PC-3 (cell line): ENCODE measurements at regions of chr14 and their contacts with region 1.

Region 1: DNA sequence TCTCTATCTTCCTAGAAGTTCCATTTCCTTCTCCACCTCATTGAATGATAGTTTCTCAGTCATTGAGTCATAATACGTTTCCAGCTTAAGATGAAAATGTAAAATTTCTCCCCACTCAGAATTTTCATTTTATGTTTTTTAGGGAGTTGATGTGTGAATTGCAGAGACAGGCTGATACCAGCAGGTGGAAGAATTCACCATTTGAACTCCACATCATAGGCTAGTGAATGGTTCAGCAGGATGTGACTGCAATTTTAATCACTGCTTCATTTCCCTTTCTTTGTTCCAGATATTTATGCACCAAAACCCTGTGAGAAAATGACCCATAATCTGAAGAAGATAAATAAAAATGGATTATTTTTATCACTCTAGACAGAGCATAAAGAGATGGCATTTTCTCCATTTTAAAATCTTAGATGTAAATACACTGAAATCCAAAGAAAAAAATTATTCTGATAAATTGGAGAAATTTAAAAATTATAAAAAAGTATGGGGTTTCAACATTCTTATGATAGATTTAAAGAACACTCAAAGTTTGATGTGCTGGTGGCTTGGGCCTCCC is 10.6 kb upstream of the PYGL start:
- DNase-seq: peak; percentile 82
- ATAC-seq: peak; percentile 69
- H3K4me3 ChIP-seq: peak overlapping the region; percentile 20; the same call in 1 of the 2 replicates
- H3K27ac ChIP-seq: peak overlapping the region; percentile 89
- H3K4me1 ChIP-seq: peaks cover 19% of the 10 kb centered on the region
- H3K27me3 ChIP-seq: no peaks in the 10 kb centered on the region
- CTCF ChIP-seq: peak; percentile 91

Region 2: DNA sequence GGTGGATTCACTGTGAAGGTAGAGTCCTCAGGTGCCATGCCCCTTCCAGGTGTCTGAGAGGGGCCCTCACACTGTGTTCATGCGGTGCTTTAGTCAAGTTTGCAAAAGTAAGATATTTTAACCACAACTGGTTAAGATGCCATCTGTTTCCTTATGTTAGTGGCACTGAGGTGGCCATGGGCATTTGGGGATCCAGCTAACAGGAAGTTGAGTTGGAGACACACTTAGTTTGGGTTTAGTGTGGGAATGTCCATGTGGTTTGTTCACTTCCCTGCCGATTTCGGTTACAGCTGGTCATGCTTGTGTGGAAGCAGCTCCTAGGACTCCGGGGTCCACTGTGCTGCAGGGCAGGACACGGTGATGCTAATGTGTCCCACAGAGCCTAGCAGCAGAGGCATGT is 100.4 kb before region 1 on chr14:
- CTCF ChIA-PET with region 1: no interaction called
- POLR2A ChIA-PET with region 1: no interaction called
- intact Hi-C with region 1: no loop called
- DNase-seq: no peak
- ATAC-seq: no peak
- H3K4me3 ChIP-seq: no peak overlapping the region
- H3K27ac ChIP-seq: no peak overlapping the region
- H3K4me1 ChIP-seq: peaks cover 4% of the 10 kb centered on the region
- H3K27me3 ChIP-seq: no peaks in the 10 kb centered on the region
- CTCF ChIP-seq: no peak

Region 3: DNA sequence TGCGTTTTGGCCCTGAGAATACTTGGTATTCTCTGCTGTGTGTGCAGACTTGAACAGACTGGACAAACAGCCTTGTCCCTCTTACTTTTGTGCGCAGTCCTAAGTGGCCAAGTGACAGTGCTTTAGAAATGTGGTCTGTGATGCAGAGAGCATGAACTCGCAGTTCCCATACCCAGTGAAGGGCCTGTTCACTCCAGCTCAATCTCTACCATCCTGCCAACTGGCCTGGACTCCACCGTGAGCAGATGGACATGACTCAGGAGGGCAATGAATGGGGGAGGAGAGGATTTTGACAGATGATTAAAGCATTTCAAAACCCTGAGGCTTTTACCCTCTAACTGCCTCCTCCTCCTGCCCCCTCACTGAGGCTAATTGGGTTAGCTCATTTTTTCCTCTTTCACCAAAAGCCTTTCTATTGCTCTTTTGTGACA is 51.9 kb after region 1 on chr14:
- CTCF ChIA-PET with region 1: no interaction called
- POLR2A ChIA-PET with region 1: no interaction called
- intact Hi-C with region 1: loop called (anchors 2 kb)
- DNase-seq: peak; percentile 86
- ATAC-seq: peak; percentile 77
- H3K4me3 ChIP-seq: peak overlapping the region; percentile 6; the same call in 1 of the 2 replicates
- H3K27ac ChIP-seq: peak overlapping the region; percentile 75
- H3K4me1 ChIP-seq: peaks cover 45% of the 10 kb centered on the region
- H3K27me3 ChIP-seq: no peaks in the 10 kb centered on the region
- CTCF ChIP-seq: no peak

Region 4: DNA sequence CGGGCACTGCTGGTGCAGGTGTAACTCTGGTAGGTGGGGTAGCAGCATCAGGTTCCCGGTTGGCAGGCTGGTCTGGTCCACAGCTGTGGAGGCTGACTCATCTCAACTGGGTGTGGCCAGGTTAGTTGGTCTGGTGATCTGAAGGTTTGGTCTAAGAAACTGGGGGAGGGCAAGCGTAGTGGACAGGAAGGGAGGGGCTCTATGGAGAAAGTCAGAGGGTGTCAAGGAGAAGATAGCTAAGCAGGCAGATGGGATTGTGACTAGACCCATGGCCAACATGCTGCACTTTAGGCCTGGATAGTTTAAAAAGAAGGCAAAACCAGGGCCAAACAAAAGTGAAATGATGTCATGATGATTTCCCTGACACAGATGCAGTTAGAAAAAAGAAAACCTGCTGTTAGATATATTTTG is 132.1 kb after region 1 on chr14:
- CTCF ChIA-PET with region 1: no interaction called
- POLR2A ChIA-PET with region 1: no interaction called
- intact Hi-C with region 1: loop called (anchors 2 kb)
- DNase-seq: peak; percentile 91
- ATAC-seq: peak; percentile 99
- H3K4me3 ChIP-seq: no peak overlapping the region
- H3K27ac ChIP-seq: no peak overlapping the region
- H3K4me1 ChIP-seq: peaks cover 13% of the 10 kb centered on the region
- H3K27me3 ChIP-seq: no peaks in the 10 kb centered on the region
- CTCF ChIP-seq: no peak

Region 5: GRCh38 chr14:51157012-51157411 is 202.1 kb after region 1 on chr14:
- CTCF ChIA-PET with region 1: interaction called, 3 read pairs
- POLR2A ChIA-PET with region 1: no interaction called
- intact Hi-C with region 1: loop called (anchors 1 kb)
- DNase-seq: peak; percentile 75
- ATAC-seq: peak; percentile 98
- H3K4me3 ChIP-seq: no peak overlapping the region
- H3K27ac ChIP-seq: no peak overlapping the region
- H3K4me1 ChIP-seq: peaks cover 11% of the 10 kb centered on the region
- H3K27me3 ChIP-seq: no peaks in the 10 kb centered on the region
- CTCF ChIP-seq: peak; percentile 91

Region 6: DNA sequence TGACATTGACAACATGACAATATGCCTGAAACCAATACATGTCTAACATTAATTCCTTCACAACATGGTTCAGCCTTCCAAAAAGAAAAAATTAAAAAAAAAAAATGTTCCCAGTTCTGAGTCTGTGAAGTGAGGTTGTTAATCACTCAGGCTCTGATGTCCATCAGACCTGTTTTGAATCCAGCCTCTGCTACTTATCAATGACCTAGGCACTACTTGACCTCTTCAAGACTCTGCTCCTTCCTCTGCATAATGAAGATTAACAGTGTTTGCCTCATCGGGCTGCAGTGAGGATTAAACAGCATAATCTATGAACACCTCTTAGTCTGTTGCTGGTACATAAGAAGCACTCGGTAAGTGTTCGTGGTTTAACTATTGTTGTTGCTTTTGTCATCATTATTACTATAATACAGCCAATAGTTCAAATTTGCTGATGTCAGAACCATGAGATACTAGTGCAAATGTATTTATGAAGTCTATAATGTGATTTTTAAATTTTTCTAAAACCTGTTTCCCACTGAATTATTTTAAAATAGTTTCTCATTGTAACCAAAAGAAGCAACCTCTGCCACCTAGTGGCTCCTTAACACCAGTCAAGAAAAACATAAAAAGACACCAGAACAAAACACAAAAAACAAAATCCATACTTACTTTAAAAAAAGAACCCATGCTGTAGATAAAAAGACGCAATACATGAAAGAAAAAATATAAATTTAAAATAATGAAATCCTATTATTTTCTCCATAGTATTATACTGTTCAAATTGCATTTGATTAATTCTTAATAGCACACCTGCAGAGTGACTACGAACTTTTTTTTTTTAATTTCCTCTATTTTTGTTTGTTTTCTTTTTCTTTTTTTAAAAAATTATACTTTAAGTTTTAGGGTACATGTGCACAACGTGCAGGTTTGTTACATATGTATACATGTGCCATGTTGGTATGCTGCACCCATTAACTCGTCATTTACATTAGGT is 264.9 kb after region 1 on chr14:
- CTCF ChIA-PET with region 1: interaction called, 5 read pairs
- POLR2A ChIA-PET with region 1: interaction called, 3 read pairs
- intact Hi-C with region 1: loop called (anchors 1 kb)
- DNase-seq: peak; percentile 63
- ATAC-seq: peak; percentile 65
- H3K4me3 ChIP-seq: no peak overlapping the region
- H3K27ac ChIP-seq: no peak overlapping the region
- H3K4me1 ChIP-seq: no peaks in the 10 kb centered on the region
- H3K27me3 ChIP-seq: no peaks in the 10 kb centered on the region
- CTCF ChIP-seq: peak; percentile 90